OCI-LY7 (cell line): ENCODE measurements at regions of chr4 and their contacts with region 1.

Region 1: DNA sequence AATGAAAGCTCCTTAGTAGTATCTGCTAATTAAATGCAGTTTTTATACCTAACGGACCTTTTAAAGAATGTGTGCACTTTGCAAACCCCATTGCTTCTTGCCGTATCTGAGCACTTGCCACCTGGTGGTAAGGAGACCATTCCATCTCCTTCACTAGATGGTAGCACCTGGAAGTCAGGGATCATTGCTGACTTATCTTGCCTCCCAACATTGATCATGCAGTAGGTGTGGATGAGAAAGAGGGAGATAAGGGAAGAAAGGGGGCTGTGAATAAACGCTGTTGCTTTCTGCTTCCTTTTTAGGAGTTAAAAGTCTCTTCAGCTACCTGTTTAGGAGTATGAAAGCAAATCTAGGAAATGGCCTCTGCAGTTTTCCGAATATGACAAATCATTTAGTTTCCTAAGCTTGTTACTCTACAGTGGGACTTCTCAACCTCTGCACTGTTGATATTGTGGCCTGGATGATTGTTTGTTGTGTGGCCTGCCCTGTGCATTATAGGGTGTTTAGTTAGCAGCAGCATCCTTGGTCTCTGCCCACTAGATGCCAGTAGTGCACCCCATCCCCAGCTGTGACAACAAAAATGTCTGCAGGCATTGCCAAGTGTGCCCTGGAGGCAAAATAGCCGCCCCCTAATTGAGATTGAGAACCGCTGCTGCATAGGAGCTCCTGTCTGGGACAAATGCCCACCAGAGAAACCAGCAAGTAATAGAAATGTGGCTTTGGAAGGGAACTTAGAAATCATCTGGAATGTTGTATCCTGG is 38.8 kb downstream of the GAB1 start:
- DNase-seq: peak; percentile 86
- H3K4me3 ChIP-seq: peak overlapping the region; percentile 23
- H3K27ac ChIP-seq: peak overlapping the region; percentile 92
- H3K4me1 ChIP-seq: peaks cover 87% of the 10 kb centered on the region
- CTCF ChIP-seq: peak; percentile 92

Region 2: DNA sequence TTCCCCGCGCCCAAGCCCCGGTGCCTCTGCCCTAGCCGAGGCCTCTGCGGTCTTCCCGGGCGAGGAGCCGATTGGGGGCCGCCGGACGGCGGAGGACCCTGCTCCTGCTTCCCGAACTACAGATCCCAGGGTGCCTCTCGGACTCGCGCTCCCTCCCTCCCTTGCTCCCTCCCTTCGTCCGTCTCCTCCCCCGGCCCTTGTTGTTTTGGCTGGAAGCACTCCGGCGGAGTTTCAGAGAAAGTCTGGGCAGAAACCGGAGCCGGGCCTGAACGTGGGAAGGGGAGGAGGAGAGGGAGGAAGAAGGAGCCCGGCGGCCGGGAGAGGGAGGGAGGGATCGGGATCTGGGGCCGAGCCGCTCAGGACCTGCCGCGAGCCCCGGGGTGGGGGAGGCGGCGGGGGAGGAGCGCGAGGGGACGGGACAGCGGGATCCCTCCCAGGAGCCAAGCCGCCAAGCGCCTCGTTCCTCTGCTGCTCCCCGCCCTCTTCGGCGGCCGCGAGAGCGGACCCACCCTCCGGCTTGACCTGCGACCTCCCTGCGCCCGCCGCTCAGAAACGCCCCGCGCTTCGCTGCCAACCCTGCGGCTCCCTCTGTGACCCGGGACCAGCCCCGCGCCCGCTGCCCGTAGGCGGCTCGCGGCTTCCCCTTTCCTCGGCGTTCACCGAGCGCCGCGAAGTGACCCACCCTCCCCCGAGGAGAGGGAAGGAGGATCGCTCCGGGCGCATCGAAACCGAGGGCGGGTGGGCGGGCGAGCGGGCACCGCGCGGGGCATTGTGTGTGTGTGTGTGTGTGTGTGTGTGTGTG is 39.3 kb before region 1 on chr4:
- CTCF ChIA-PET with region 1: interaction called, 3 read pairs
- POLR2A ChIA-PET with region 1: interaction called, 21 read pairs
- intact Hi-C with region 1: loop called (anchors 1 kb)
- DNase-seq: peak; percentile 74
- H3K4me3 ChIP-seq: peak overlapping the region; percentile 94
- H3K27ac ChIP-seq: peak overlapping the region; percentile 59
- H3K4me1 ChIP-seq: peaks cover 43% of the 10 kb centered on the region
- CTCF ChIP-seq: no peak

Region 3: GRCh38 chr4:143389579-143390195 is 14.2 kb after region 1 on chr4:
- CTCF ChIA-PET with region 1: interaction called, 14 read pairs
- POLR2A ChIA-PET with region 1: interaction called, 364 read pairs
- intact Hi-C with region 1: loop called (anchors 1 kb)
- DNase-seq: no peak
- H3K4me3 ChIP-seq: peak overlapping the region; percentile 5
- H3K27ac ChIP-seq: peak overlapping the region; percentile 96
- H3K4me1 ChIP-seq: peaks cover 80% of the 10 kb centered on the region
- CTCF ChIP-seq: no peak

Region 4: GRCh38 chr4:143406523-143406922 is 31.0 kb after region 1 on chr4:
- CTCF ChIA-PET with region 1: interaction called, 3 read pairs
- POLR2A ChIA-PET with region 1: interaction called, 83 read pairs
- intact Hi-C with region 1: loop called (anchors 1 kb)
- DNase-seq: no peak
- H3K4me3 ChIP-seq: no peak overlapping the region
- H3K27ac ChIP-seq: peak overlapping the region; percentile 97
- H3K4me1 ChIP-seq: peaks cover 99% of the 10 kb centered on the region
- CTCF ChIP-seq: no peak

Region 5: DNA sequence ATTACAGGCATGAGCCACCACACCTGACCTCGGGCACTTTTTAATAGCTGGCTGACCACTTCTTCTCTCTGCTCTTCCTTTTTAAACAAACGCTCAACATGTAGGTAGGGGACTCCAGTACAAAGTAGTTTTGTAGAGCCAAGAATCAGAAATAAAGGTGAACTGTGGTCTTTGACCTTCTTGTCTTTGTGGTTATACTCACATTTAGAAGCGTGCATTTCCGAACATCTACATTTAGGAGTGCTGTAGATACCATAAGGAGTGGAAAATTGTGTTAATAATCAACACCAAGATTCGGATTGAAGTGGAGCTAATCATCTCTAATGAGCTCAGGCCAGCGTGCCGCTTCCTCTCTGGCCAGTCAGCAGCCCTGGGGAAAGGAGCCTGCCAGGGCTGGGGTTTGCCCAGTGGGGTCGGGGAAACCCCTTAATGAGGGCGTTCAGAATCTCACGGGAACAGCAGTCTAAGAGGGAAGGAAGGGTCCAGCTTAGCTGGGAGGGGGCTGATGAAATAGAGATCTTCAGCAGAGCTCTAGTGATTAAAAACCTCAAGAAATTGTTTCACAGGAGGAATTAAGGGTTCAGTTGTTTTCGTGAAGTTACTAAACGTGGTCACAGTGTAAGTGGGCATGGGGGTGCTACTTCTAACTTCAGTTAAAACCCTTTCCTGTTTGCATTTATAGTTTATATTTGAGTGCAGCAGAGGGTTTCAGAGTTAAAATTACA is 42.3 kb after region 1 on chr4:
- CTCF ChIA-PET with region 1: interaction called, 6 read pairs
- POLR2A ChIA-PET with region 1: interaction called, 75 read pairs
- intact Hi-C with region 1: loop called (anchors 2 kb)
- DNase-seq: peak; percentile 71
- H3K4me3 ChIP-seq: peak overlapping the region; percentile 50
- H3K27ac ChIP-seq: peak overlapping the region; percentile 98
- H3K4me1 ChIP-seq: peaks cover 85% of the 10 kb centered on the region
- CTCF ChIP-seq: no peak

Region 6: DNA sequence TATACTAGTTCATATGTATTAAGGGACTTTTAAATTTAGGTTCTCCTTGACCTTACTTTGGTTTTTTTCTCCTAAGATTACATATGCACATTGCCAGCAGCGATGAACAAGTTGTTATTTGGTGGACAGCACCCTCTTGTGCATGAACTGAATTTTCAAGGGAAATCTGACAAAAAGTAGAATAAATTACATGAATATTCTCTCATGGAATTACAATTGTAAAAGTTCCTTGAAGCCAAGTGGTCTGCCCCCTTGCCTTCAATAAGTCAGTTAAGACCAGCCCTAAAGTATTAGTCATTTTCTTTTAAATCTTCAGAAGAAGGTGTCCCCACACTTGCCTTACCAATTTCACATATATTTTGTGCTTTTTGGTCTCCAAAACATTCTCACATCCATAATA is 107.3 kb after region 1 on chr4:
- CTCF ChIA-PET with region 1: interaction called, 4 read pairs
- POLR2A ChIA-PET with region 1: interaction called, 8 read pairs
- intact Hi-C with region 1: loop called (anchors 1 kb)
- DNase-seq: peak; percentile 77
- H3K4me3 ChIP-seq: no peak overlapping the region
- H3K27ac ChIP-seq: no peak overlapping the region
- H3K4me1 ChIP-seq: peaks cover 15% of the 10 kb centered on the region
- CTCF ChIP-seq: peak; percentile 91